Breast epithelium (tissue), 4 donors: ENCODE measurements at regions of chr13 and their contacts with region 1.

Region 1: DNA sequence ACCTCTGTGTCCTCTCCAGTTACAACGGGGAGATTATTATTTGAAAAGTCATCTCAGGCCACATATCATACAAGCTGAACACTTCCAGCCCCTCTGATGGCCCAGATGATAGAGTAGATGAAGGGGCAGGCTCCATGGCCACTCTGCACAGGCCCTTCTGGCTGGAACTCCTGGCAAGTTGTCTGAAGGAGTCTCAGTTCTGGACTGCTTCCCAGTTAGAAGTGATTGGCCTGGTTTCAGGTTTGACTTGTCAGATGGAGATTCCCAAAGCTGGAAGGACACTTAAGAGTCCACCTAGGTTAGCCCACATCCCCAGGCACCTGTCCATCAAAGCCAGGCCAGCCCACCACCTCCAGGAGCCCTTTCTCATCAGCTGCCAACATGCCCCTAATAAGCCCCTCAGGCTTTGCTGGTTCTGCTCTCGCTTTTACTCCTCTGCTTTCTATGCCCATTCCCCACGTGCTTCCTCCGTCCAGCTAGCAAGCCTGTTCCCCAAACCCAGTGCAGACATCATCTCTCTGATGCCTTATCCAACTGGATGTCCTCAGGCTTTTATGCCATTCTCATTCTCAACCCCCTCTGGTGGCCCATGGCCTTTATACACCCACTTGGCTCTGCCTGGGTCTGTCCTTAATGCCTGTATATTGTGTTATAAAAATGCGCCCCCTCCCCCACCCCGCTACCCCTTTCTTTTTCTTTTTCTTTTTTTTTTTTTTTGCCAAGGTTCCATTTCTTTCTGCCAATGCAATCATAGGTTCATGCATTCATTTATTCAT is 56.5 kb downstream of the HSPH1 start:
- DNase-seq: no peak
- H3K4me3 ChIP-seq: no peak overlapping the region
- H3K27ac ChIP-seq: no peak overlapping the region
- H3K4me1 ChIP-seq: no peaks in the 10 kb centered on the region
- H3K27me3 ChIP-seq: no peaks in the 10 kb centered on the region
- CTCF ChIP-seq: no peak
- POLR2A ChIP-seq: no peak

Region 2: GRCh38 chr13:31050486-31051400 is 54.5 kb before region 1 on chr13:
- intact Hi-C with region 1: no loop called
- DNase-seq: no peak
- H3K4me3 ChIP-seq: no peak overlapping the region
- H3K27ac ChIP-seq: no peak overlapping the region
- H3K4me1 ChIP-seq: peaks cover 0 to 4% of the 10 kb centered on the region in 2 donors
- H3K27me3 ChIP-seq: no peaks in the 10 kb centered on the region
- CTCF ChIP-seq: peak in 1 of 3 donors; percentile 22
- POLR2A ChIP-seq: no peak

Region 3: GRCh38 chr13:31090991-31091531 is 14.1 kb before region 1 on chr13:
- intact Hi-C with region 1: loop called (anchors 1 kb)
- DNase-seq: no peak
- H3K4me3 ChIP-seq: no peak overlapping the region
- H3K27ac ChIP-seq: no peak overlapping the region
- H3K4me1 ChIP-seq: no peaks in the 10 kb centered on the region
- H3K27me3 ChIP-seq: no peaks in the 10 kb centered on the region
- CTCF ChIP-seq: no peak
- POLR2A ChIP-seq: no peak

Region 4: DNA sequence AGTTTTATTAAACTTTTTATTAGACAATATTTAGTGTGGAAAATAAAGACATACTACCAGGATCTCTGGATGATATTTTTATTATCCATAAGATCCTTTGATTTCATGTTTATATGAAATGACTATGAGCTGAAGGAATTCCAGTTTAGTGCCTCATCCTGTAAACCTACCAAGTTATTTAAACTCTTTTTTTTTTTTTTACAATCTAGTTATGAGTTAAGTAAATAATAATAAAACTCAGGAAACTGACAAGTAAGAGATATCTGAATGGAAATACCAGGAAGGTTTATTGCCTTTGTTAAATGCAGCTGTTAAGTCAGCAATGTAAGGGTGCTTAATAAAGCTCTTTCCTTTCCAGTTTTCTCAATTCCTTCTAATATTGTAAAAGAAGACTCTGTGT is 688.0 kb after region 1 on chr13:
- intact Hi-C with region 1: no loop called
- DNase-seq: no peak
- H3K4me3 ChIP-seq: no peak overlapping the region
- H3K27ac ChIP-seq: no peak overlapping the region
- H3K4me1 ChIP-seq: no peaks in the 10 kb centered on the region
- H3K27me3 ChIP-seq: no peaks in the 10 kb centered on the region
- CTCF ChIP-seq: no peak
- POLR2A ChIP-seq: no peak

Region 5: GRCh38 chr13:31987535-31988170 is 882.4 kb after region 1 on chr13:
- intact Hi-C with region 1: loop called (anchors 5 kb)
- DNase-seq: no peak
- H3K4me3 ChIP-seq: no peak overlapping the region
- H3K27ac ChIP-seq: no peak overlapping the region
- H3K4me1 ChIP-seq: peaks cover 0 to 5% of the 10 kb centered on the region in 2 donors
- H3K27me3 ChIP-seq: no peaks in the 10 kb centered on the region
- CTCF ChIP-seq: no peak
- POLR2A ChIP-seq: no peak